A549 (cell line): ENCODE measurements at regions of chr12 and their contacts with region 1.

Region 1: DNA sequence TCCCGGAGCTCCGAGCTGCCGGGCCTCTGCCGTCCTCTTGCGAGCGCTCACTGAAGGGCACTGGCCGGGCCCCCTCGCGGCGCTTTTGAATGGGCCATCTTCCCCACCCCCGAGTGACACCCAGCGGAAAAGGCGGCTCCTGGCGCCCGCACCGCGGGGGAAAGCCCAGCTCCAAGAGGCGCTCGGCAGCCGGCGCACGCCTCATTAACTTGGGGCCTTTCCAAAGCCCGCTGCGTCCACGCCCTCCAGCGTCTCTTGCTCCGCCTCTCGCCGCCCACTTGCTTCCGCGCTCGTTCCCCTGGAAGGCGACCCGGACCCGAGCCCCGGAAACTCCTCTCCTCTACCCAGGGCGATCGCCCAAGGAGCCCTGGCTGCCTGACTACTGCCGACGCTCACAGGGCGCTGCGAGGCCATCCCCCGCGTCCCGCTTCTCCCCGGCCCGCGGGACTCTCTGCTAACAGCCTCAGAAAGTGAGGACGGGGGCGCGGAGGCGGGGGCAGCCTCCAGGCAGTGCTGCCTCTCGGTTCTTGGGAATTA is at the start of gene PHLDA1:
- DNase-seq: peak; percentile 96 to 97
- ATAC-seq: peak; percentile 75 to 84
- H3K4me3 ChIP-seq: peak within 1 kb of the TSS; percentile 87
- H3K27ac ChIP-seq: peak within 1 kb of the TSS; percentile 97 to 99
- H3K4me1 ChIP-seq: peaks cover 36% of the 10 kb centered on the region
- CTCF ChIP-seq: peak; percentile 42
- EP300 ChIP-seq: no peak; a peak in 1 of 5 replicates
- POLR2A ChIP-seq: peak; percentile 94
- RAD21 ChIP-seq: peak; percentile 69 to 80
- polyA plus RNA-seq, gene PHLDA1: 54.1 and 71.6 TPM in 2 replicates

Region 2: DNA sequence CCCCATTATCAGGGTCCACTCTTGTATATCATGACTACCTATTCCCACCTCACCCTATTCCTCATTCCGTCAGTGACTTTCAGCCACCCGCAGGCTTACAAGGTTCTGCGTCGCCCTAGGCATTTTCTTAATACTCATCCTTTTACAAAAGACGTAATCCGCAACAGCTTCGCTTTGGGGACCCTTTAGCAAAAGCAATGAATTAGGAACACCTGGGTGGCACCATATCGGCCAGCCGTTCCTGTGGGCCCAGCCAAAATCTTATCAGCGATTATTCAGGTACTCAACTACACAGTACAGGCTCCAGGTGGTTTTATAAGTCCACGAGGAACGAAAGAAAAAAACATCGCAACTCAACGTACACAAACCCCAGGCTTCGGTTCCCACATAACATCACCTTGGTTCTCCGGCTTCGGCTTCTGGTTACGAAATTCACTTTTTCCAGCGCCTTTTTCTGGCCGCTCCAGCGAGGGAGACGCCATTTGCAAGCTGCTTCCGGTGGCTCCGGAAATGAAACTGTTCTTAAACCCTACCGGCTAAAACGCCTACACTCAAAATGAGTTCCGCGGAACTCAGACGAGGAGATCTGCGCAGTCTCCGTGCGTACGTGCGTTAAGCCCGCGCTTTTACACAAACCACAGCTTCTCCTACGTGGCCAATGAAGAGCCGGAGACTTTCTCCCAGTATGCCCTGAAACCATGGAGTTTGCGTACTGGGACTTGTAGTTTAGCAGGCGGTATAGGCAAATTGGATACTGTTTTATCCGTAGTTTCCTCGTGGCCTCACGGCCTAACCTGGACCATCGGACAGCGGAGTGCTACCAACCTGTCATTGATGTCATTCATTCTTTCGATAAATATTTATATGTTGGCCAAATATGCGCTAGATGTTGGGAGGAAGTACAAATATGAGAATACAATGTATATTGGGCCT is 520.2 kb before region 1 on chr12 and contains the start of gene KRR1:
- CTCF ChIA-PET with region 1: interaction called, 4 read pairs
- POLR2A ChIA-PET with region 1: interaction called, 20 read pairs
- DNase-seq: peak; percentile 84 to 100
- ATAC-seq: peak; percentile 99 to 100
- H3K4me3 ChIP-seq: peak within 1 kb of the TSS; percentile 72
- H3K27ac ChIP-seq: peak within 1 kb of the TSS; percentile 82 to 89
- H3K4me1 ChIP-seq: peaks cover 14% of the 10 kb centered on the region
- CTCF ChIP-seq: no peak
- EP300 ChIP-seq: no peak
- POLR2A ChIP-seq: peak; percentile 41; the same call in 1 of the 2 replicates
- RAD21 ChIP-seq: no peak
- polyA plus RNA-seq, gene KRR1: 63.9 and 122 TPM in 2 replicates

Region 3: DNA sequence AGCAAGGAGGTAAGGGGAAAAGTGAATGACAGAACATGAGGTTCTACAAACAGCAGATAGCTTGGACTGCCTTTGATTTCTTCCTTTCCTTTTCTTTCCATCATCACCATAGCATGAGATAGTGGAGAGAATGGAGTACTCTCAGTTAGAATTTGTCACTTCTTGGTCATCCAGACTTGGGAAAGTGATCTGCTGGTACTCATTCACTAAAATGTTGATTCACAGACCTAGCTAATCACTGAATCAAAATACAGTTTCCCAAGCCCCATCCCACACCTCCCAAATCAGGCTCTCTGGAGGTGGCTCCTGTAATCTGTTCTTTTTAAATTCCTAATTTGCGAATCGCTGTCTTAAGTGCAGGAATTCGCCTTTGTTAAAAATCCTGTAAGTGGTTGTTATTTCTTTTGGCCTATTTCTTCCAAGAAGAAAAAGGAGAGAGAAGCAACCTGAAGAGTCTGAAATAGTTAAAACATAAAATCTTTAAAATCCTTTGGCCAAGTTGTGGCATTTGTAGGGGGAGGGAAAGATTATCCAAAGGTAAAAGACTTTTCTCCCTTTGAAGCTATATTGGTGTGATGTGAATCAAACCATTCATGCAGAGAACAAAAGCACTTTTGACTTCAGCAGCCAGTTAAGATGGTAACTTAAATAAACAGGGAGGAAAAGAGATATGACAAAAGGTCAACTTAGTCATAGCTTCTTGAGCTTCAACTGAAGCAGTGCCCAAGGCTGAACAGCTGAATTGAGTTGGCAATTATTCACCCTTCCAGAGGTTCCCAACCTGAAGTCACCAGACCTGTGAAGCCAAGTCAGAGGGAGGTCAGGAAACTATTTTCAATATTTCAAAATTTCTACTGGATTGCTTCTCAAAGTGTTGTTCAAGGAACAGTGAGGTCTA is 265.1 kb before region 1 on chr12:
- CTCF ChIA-PET with region 1: interaction called, 3 read pairs
- POLR2A ChIA-PET with region 1: interaction called, 12 read pairs
- DNase-seq: peak; percentile 75 to 92
- ATAC-seq: peak; percentile 93 to 96
- H3K4me3 ChIP-seq: no peak overlapping the region
- H3K27ac ChIP-seq: peak overlapping the region; percentile 75 to 91
- H3K4me1 ChIP-seq: peaks cover 41% of the 10 kb centered on the region
- CTCF ChIP-seq: no peak
- EP300 ChIP-seq: peak; percentile 94 to 98
- POLR2A ChIP-seq: no peak
- RAD21 ChIP-seq: peak in 1 of 2 experiments; percentile 82

Region 4: DNA sequence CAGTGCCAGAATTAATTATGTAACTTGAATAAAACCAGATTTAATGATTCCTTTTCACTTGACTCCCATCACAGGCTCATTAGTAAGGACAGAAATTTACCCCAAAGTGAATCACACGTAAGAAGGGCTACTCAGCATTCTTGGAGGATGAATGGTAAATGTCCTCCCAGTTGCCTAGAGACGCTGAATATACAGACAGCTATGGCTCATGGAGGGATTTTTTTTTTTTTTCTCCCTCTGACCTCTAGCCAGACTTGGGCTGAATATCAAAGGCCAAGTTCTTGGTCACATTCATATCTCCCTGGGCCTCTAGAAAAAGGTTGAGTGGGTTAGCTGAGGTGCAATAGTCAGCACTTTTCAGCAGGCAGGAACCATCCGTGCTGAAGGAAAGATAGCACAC is 77.6 kb before region 1 on chr12:
- CTCF ChIA-PET with region 1: interaction called, 4 read pairs
- POLR2A ChIA-PET with region 1: interaction called, 18 read pairs
- DNase-seq: peak; percentile 92 to 94
- ATAC-seq: peak; percentile 92 to 97
- H3K4me3 ChIP-seq: no peak overlapping the region
- H3K27ac ChIP-seq: peak overlapping the region; percentile 83 to 91
- H3K4me1 ChIP-seq: peaks cover 60% of the 10 kb centered on the region
- CTCF ChIP-seq: no peak
- EP300 ChIP-seq: peak in 1 of 2 experiments; percentile 52; a peak in 2 of 5 replicates
- POLR2A ChIP-seq: no peak
- RAD21 ChIP-seq: peak; percentile 27 to 28; a peak in 4 of 5 replicates

Region 5: GRCh38 chr12:76020731-76021672 is 10.6 kb before region 1 on chr12:
- CTCF ChIA-PET with region 1: interaction called, 12 read pairs
- POLR2A ChIA-PET with region 1: interaction called, 45 read pairs
- DNase-seq: peak; percentile 62 to 87
- ATAC-seq: peak; percentile 56 to 61
- H3K4me3 ChIP-seq: no peak overlapping the region; the same call in 2 of the 3 replicates
- H3K27ac ChIP-seq: peak overlapping the region; percentile 91 to 92
- H3K4me1 ChIP-seq: peaks cover 63% of the 10 kb centered on the region
- CTCF ChIP-seq: no peak
- EP300 ChIP-seq: peak in 1 of 2 experiments; percentile 34; a peak in 1 of 5 replicates
- POLR2A ChIP-seq: no peak
- RAD21 ChIP-seq: peak in 1 of 2 experiments; percentile 29; a peak in 1 of 5 replicates

Region 6: GRCh38 chr12:76455582-76456345 is 424.2 kb after region 1 on chr12:
- CTCF ChIA-PET with region 1: interaction called, 8 read pairs
- POLR2A ChIA-PET with region 1: interaction called, 12 read pairs
- DNase-seq: peak; percentile 49 to 91
- ATAC-seq: peak; percentile 95 to 98
- H3K4me3 ChIP-seq: peak overlapping the region; percentile 39
- H3K27ac ChIP-seq: peak overlapping the region; percentile 67 to 86
- H3K4me1 ChIP-seq: peaks cover 28% of the 10 kb centered on the region; the same call in 2 of the 3 replicates
- CTCF ChIP-seq: peak; percentile 89
- EP300 ChIP-seq: no peak
- POLR2A ChIP-seq: no peak
- RAD21 ChIP-seq: peak; percentile 91 to 95